IMR-90 (cell line): ENCODE measurements at regions of chr2 and their contacts with region 1.

Region 1: DNA sequence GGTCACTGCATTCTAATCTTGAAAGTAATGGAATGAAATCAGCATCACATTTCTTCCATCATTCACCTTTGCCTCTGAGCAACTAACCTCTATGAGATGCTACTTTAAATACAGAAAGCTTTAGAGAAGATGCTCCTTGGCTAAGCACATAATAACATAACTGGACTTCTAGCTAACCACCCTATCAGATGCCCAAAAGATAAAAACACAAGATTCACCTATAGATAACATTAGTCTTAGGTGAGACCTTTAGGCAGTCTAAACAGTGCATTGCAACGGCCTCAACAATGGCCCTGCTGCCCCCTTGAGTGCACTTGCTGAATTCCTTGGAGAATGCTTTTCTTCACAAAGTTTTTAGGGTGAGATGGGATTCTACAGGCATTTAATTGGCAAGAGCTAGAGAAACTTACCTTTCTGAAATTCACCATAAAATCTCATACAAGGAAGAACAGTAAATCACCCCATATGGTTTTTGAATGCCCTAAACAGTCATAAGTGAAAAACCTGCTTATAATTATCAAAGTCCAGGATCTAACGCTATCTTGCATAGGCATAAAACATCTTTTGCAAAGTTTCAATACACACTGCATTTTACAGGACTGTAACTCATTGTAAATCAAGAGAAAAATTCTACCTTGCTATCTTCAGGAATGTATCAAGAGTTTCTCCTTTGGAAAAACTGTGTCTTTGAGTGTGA is 791.2 kb upstream of the CHAC2 start:
- DNase-seq: peak; percentile 37
- ATAC-seq: peak; percentile 72
- H3K4me3 ChIP-seq: no peak overlapping the region
- H3K27ac ChIP-seq: no peak overlapping the region
- H3K4me1 ChIP-seq: no peaks in the 10 kb centered on the region
- H3K27me3 ChIP-seq: no peaks in the 10 kb centered on the region
- CTCF ChIP-seq: peak; percentile 73
- POLR2A ChIP-seq: no peak
- RAD21 ChIP-seq: peak; percentile 82

Region 2: DNA sequence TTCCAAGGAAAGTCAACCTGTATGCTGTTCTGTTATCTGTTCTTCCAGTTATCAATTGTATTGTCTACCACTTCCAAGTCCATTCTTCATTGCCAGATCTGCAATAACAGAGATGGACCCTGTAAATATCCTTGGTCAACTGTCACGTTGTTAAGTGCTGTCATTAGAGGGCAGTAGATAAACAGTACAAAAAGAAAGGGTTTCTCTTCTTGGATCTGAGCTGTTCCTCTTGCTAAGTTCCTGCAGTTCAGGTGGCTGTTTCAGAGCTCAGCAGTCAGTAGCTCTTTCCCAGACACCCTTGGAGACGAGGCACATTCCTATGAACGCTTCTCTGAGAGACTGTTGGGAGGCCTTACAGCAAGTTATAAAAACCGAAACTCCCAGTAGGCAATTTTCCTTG is 165.9 kb before region 1 on chr2:
- CTCF ChIA-PET with region 1: interaction called, 3 read pairs
- POLR2A ChIA-PET with region 1: no interaction called
- dilution Hi-C with region 1: no loop called
- in situ Hi-C with region 1: no loop called
- intact Hi-C with region 1: loop called (anchors 5 kb)
- DNase-seq: peak; percentile 49
- ATAC-seq: peak; percentile 74
- H3K4me3 ChIP-seq: no peak overlapping the region
- H3K27ac ChIP-seq: no peak overlapping the region
- H3K4me1 ChIP-seq: no peaks in the 10 kb centered on the region
- H3K27me3 ChIP-seq: no peaks in the 10 kb centered on the region
- CTCF ChIP-seq: peak; percentile 52
- POLR2A ChIP-seq: no peak
- RAD21 ChIP-seq: peak; percentile 55